Mammary epithelial cell (primary cell): ENCODE measurements at regions of chr1 and their contacts with region 1.

Region 1: DNA sequence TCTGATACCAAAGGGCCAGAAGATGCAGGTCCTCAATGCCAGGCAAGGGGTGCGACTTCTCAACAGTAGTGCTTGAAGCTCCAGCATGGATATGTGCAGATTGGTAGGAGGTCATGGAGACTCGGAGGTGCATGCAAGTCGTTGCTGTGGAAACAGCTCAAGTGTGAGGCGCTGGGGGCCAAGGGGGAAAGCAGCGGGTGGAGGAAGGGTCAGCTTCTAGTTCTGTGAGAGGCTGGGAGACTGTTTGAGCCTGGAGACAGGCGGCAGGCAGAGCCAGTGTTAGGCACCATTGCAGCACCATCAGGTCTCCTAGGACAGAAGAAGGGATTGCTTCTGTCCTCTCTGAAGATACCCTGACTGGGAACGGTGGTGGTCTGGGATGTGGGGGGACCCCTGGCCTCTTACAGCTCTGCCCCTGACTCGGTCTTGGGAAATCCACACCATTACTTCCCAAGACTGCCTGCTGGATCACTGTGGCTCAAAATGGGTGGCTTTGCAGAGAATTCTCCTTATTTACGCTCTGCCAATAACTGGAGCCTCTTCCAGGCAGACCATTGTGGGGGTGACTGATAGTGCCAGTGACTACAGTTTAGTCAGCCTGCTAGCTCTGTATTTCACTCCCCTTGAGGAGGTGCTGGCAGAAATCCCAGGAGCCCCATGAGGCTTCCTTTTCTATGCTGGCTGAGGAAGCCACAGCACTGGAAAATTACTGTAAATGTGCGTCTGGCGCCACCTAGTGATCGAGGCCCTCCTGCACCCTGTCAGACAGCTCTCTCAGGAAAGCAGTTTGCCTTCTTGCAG is 46.3 kb upstream of the VANGL1 start:
- DNase-seq: peak; percentile 84
- H3K4me3 ChIP-seq: no peak overlapping the region
- H3K27ac ChIP-seq: no peak overlapping the region
- H3K4me1 ChIP-seq: peaks cover 3% of the 10 kb centered on the region
- H3K27me3 ChIP-seq: no peaks in the 10 kb centered on the region
- CTCF ChIP-seq: peak; percentile 98 to 99

Region 2: GRCh38 chr1:114979278-114979891 is 616.1 kb before region 1 on chr1:
- CTCF ChIA-PET with region 1: no interaction called
- dilution Hi-C with region 1: no loop called
- in situ Hi-C with region 1: no loop called
- intact Hi-C with region 1: loop called (anchors 1 kb)
- DNase-seq: peak; percentile 39
- H3K4me3 ChIP-seq: no peak overlapping the region
- H3K27ac ChIP-seq: no peak overlapping the region
- H3K4me1 ChIP-seq: no peaks in the 10 kb centered on the region
- H3K27me3 ChIP-seq: no peaks in the 10 kb centered on the region
- CTCF ChIP-seq: peak; percentile 70 to 72

Region 3: GRCh38 chr1:115275212-115275611 is 320.3 kb before region 1 on chr1:
- CTCF ChIA-PET with region 1: no interaction called
- dilution Hi-C with region 1: no loop called
- in situ Hi-C with region 1: no loop called
- intact Hi-C with region 1: loop called (anchors 1 kb)
- DNase-seq: no peak
- H3K4me3 ChIP-seq: no peak overlapping the region
- H3K27ac ChIP-seq: no peak overlapping the region
- H3K4me1 ChIP-seq: no peaks in the 10 kb centered on the region
- H3K27me3 ChIP-seq: no peaks in the 10 kb centered on the region
- CTCF ChIP-seq: peak; percentile 45 to 72

Region 4: DNA sequence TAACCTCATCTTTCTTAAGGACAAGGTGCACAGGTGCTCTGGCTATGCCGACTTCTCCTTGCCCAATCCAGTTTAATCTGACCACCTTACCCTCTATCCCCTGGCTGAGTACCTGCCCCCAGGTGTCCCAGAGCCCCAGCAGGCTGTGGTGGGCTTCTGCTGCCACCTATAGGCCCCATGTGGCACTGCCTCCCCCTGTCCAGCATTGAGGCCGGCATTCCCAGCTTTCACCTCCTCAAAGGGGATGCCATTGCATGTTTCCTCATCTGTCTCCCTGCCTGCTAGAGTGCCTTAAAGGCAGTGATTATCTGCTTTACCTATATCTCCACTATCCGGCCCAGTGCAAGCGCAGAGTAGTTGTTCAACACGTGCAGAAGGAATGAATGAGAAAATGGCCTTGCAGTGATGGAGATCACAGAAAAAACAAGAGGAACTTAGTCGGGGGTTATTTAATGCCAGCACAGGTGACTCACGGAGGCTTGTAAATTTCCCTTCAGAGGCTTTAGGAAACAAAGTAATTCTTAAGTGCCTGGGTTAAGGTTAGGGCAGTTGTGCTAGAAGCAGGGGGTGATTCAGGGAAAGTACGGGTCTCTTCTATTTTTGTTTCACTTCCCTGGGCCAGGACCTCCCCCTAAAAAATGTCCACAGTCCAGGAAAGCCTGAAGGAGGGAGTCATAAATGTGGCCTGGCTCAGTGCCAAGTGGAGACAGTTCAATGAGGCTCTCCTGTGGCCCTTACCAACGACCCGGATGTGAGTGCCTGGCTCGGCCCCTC is 125.6 kb before region 1 on chr1:
- CTCF ChIA-PET with region 1: interaction called, 6 read pairs
- dilution Hi-C with region 1: no loop called
- in situ Hi-C with region 1: loop called in 1 of 2 experiments (anchors 5 kb)
- intact Hi-C with region 1: loop called (anchors 1 kb)
- DNase-seq: peak; percentile 74
- H3K4me3 ChIP-seq: no peak overlapping the region
- H3K27ac ChIP-seq: peak overlapping the region; percentile 31
- H3K4me1 ChIP-seq: peaks cover 28% of the 10 kb centered on the region
- H3K27me3 ChIP-seq: no peaks in the 10 kb centered on the region
- CTCF ChIP-seq: peak; percentile 93 to 98

Region 5: GRCh38 chr1:115492880-115493279 is 102.6 kb before region 1 on chr1:
- CTCF ChIA-PET with region 1: no interaction called
- dilution Hi-C with region 1: no loop called
- in situ Hi-C with region 1: no loop called
- intact Hi-C with region 1: no loop called
- DNase-seq: peak; percentile 46
- H3K4me3 ChIP-seq: no peak overlapping the region
- H3K27ac ChIP-seq: no peak overlapping the region
- H3K4me1 ChIP-seq: peaks cover 23% of the 10 kb centered on the region
- H3K27me3 ChIP-seq: no peaks in the 10 kb centered on the region
- CTCF ChIP-seq: no peak

Region 6: GRCh38 chr1:115545791-115546733 is 49.4 kb before region 1 on chr1:
- CTCF ChIA-PET with region 1: no interaction called
- dilution Hi-C with region 1: loop called (anchors 5 kb)
- in situ Hi-C with region 1: loop called in 1 of 2 experiments (anchors 5 kb)
- intact Hi-C with region 1: loop called (anchors 1 kb)
- DNase-seq: peak; percentile 97
- H3K4me3 ChIP-seq: no peak overlapping the region
- H3K27ac ChIP-seq: peak overlapping the region; percentile 75
- H3K4me1 ChIP-seq: peaks cover 22% of the 10 kb centered on the region
- H3K27me3 ChIP-seq: no peaks in the 10 kb centered on the region
- CTCF ChIP-seq: peak; percentile 81 to 84

Region 7: GRCh38 chr1:115624859-115625258 is 29.4 kb after region 1 on chr1:
- CTCF ChIA-PET with region 1: no interaction called
- dilution Hi-C with region 1: no loop called
- in situ Hi-C with region 1: no loop called
- intact Hi-C with region 1: no loop called
- DNase-seq: no peak
- H3K4me3 ChIP-seq: no peak overlapping the region
- H3K27ac ChIP-seq: no peak overlapping the region
- H3K4me1 ChIP-seq: no peaks in the 10 kb centered on the region
- H3K27me3 ChIP-seq: no peaks in the 10 kb centered on the region
- CTCF ChIP-seq: peak in 1 of 2 donors; percentile 29